Ovary (tissue), 10 donors: ENCODE measurements at regions of chr19 and their contacts with region 1.

Region 1: GRCh38 chr19:50511068-50511822 is at the start of gene JOSD2:
- DNase-seq: peak; percentile 98 to 99 (median 99)
- H3K4me3 ChIP-seq: peak within 1 kb of the TSS; percentile 52
- H3K27ac ChIP-seq: peak within 1 kb of the TSS; percentile 64 to 65
- H3K4me1 ChIP-seq: peaks cover 6% of the 10 kb centered on the region
- H3K27me3 ChIP-seq: no peaks in the 10 kb centered on the region
- CTCF ChIP-seq: peak in 2 of 3 donors; percentile 27 to 33
- EP300 ChIP-seq: peak; percentile 76
- POLR2A ChIP-seq: peak; percentile 51
- total RNA-seq, gene JOSD2: 15.0 to 28.9 (median 21.8) TPM

Region 2: GRCh38 chr19:50162988-50163387 is 348.3 kb before region 1 on chr19 and contains the start of gene IZUMO2:
- intact Hi-C with region 1: loop called in 1 of 4 experiments (anchors 5 kb)
- DNase-seq: no peak
- H3K4me3 ChIP-seq: no peak within 1 kb of the TSS
- H3K27ac ChIP-seq: no peak within 1 kb of the TSS
- H3K4me1 ChIP-seq: no peaks in the 10 kb centered on the region
- H3K27me3 ChIP-seq: no peaks in the 10 kb centered on the region
- CTCF ChIP-seq: no peak
- EP300 ChIP-seq: no peak
- POLR2A ChIP-seq: no peak
- total RNA-seq, gene IZUMO2: not detected

Region 3: DNA sequence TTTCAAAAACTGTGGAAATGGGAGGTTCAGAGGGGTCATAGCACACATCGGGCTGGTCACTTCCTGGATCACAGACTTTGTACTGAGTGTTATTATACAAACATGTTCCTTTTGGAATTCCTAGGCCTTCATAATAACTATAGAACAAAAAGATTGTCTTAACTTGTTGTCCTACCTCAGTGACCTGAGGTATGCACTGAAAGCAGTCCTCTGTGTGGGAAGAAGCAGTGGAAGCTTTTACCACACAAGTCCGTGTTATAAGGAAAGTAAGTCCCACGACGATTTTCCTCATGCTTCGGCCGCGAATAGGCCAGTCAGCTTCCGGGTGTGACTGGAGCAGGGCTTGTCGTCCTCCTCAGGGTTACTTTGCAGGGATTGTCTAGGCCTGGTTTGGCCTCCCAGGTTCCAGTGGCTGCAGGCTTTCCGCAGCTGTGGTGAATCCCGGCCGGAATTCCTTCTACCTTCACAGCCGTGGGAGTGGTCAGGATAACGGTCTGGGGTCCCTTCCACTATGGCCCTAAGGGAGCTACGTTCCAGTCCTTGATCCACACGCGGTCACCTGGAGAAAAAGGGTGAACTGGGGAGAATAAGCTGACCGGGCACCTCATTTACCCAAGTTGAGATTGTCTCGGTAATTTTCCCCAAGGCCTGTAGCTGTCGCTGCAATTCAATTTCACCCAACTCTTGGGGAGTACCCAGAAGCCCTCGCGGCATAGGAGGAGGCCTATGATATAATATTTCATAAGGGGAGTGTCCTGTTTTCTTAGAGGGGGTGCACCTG is 161.8 kb before region 1 on chr19:
- intact Hi-C with region 1: loop called in 1 of 4 experiments (anchors 5 kb)
- DNase-seq: no peak
- H3K4me3 ChIP-seq: no peak overlapping the region
- H3K27ac ChIP-seq: no peak overlapping the region
- H3K4me1 ChIP-seq: no peaks in the 10 kb centered on the region
- H3K27me3 ChIP-seq: no peaks in the 10 kb centered on the region
- CTCF ChIP-seq: no peak
- EP300 ChIP-seq: no peak
- POLR2A ChIP-seq: no peak

Region 4: GRCh38 chr19:50794439-50795237 is 283.4 kb after region 1 on chr19:
- intact Hi-C with region 1: loop called in 1 of 4 experiments (anchors 10 kb)
- DNase-seq: peak in 1 of 5 donors; percentile 26
- H3K4me3 ChIP-seq: no peak overlapping the region
- H3K27ac ChIP-seq: no peak overlapping the region
- H3K4me1 ChIP-seq: no peaks in the 10 kb centered on the region
- H3K27me3 ChIP-seq: no peaks in the 10 kb centered on the region
- CTCF ChIP-seq: no peak
- EP300 ChIP-seq: no peak
- POLR2A ChIP-seq: no peak